BJ (cell line): ENCODE measurements at regions of chr5 and their contacts with region 1.

Region 1: GRCh38 chr5:104178829-104179456 is 616.4 kb upstream of the NUDT12 start:
- DNase-seq: no peak
- H3K4me3 ChIP-seq: no peak overlapping the region
- H3K27me3 ChIP-seq: no peaks in the 10 kb centered on the region
- CTCF ChIP-seq: peak; percentile 50

Region 2: DNA sequence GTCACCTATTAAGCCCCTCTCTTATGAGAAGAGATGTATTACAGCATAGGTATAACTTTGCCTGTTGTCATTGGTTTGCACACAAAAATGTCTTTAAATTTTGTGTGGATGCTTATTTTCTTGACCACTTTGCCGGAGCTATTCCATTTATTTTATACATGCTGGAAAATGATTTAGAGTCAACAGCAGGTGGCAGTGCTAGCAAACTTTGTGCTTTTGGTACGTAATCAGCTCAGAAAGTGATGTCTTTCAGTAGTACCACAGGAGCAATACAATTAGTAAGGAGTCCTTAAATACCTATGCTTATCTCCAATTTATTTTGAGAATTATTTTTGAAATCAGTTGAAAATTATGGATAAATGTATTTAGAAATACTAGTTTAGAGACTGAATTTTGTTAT is 596.6 kb before region 1 on chr5:
- CTCF ChIA-PET with region 1: interaction called, 27 read pairs
- POLR2A ChIA-PET with region 1: no interaction called
- DNase-seq: no peak
- H3K4me3 ChIP-seq: no peak overlapping the region
- H3K27me3 ChIP-seq: peaks cover 2% of the 10 kb centered on the region; the same call in 1 of the 2 replicates
- CTCF ChIP-seq: peak; percentile 49

Region 3: GRCh38 chr5:103808464-103809106 is 370.4 kb before region 1 on chr5:
- CTCF ChIA-PET with region 1: interaction called, 45 read pairs
- POLR2A ChIA-PET with region 1: no interaction called
- DNase-seq: no peak
- H3K4me3 ChIP-seq: no peak overlapping the region
- H3K27me3 ChIP-seq: no peaks in the 10 kb centered on the region
- CTCF ChIP-seq: peak; percentile 93

Region 4: DNA sequence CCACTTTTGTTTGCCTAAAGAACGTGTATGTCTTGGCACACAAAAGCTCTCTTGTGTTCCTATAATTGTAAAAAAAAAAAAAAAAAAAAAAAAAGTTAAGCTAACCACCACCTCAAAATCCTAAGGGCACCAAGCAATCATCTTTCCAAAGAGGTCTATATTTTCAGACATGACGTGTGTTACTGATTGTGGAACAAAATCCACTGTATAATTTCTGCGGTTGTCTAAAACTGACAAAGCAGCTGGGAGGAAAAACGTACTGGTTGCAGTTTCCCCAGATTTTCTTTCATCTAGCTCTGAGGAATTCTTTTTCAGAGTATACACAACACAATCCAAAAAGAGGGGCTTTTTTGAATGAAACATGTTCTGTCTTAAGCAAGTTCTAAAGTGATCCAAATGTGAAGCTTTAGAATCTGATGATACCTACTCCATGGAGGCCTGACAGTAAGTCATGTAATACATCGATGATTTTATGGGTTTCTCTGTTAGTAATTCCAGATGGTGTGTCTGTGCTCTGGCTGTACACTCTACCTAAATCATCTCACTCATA is 240.7 kb before region 1 on chr5:
- CTCF ChIA-PET with region 1: no interaction called
- POLR2A ChIA-PET with region 1: no interaction called
- DNase-seq: no peak
- H3K4me3 ChIP-seq: no peak overlapping the region
- H3K27me3 ChIP-seq: no peaks in the 10 kb centered on the region
- CTCF ChIP-seq: no peak